HCT116 (cell line): ENCODE measurements at regions of chr16 and their contacts with region 1.

Region 1: DNA sequence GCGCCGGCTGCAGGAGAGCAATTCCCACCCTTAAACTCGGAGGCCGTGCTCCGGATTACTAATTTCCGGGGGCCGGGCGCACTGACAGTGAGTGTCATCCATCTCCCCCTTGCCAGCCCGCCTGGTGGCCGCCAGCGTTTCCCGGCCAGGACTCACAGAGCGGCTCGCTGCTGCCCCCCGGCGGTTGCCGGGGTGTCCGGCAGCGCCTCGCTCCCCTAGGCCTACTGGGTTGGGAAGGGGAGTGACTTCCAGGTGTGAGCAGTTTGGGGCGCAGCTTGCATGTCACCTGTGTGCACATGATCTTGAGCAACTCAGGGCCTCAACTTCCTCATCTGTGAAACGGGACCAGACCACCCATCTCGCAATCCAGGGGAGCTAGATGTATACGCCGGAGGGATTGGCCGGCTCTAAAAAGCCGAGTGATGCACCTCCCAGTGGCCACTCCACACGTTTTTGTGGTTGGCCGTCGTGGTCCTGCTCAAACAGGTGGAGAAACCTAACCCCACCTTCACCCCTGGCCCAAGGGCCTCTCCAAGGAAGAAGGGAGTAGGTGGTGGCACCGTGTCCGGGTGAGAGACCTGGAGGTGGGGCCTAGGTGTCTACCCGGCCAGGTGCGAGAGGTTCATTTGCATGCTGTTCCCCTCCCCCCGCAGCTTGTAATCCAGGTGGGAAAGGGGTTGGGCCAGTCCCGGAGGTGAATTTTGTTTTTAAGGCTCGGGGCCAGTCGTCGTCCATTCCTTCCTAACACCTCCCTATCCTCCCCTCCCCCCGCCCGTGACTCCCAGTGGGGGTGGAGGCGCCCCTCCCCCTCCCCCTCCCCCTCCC is 2.4 kb upstream of the GSE1 start:
- DNase-seq: peak; percentile 83
- ATAC-seq: peak; percentile 49
- H3K4me3 ChIP-seq: peak overlapping the region; percentile 85 to 91
- H3K27ac ChIP-seq: peak overlapping the region; percentile 98
- H3K4me1 ChIP-seq: peaks cover 20 to 52% of the 10 kb centered on the region in 2 experiments
- H3K27me3 ChIP-seq: no peaks in the 10 kb centered on the region
- CTCF ChIP-seq: peak in 2 of 3 experiments; percentile 99 to 100; a peak in 4 of 6 replicates
- POLR2A ChIP-seq: no peak
- RAD21 ChIP-seq: no peak

Region 2: GRCh38 chr16:85220125-85220839 is 390.4 kb before region 1 on chr16:
- CTCF ChIA-PET with region 1: no interaction called
- POLR2A ChIA-PET with region 1: no interaction called
- RAD21 ChIA-PET with region 1: no interaction called
- intact Hi-C with region 1: no loop called
- DNase-seq: no peak
- ATAC-seq: no peak
- H3K4me3 ChIP-seq: no peak overlapping the region
- H3K27ac ChIP-seq: no peak overlapping the region; the same call in 1 of the 2 replicates
- H3K4me1 ChIP-seq: peaks cover 5 to 12% of the 10 kb centered on the region in 2 experiments; a peak in 3 of 4 replicates
- H3K27me3 ChIP-seq: no peaks in the 10 kb centered on the region
- CTCF ChIP-seq: no peak
- POLR2A ChIP-seq: no peak
- RAD21 ChIP-seq: no peak

Region 3: GRCh38 chr16:85347213-85347591 is 263.5 kb before region 1 on chr16:
- CTCF ChIA-PET with region 1: interaction called, 12 read pairs
- POLR2A ChIA-PET with region 1: interaction called, 3 read pairs
- RAD21 ChIA-PET with region 1: no interaction called
- intact Hi-C with region 1: loop called (anchors 1 kb)
- DNase-seq: no peak
- ATAC-seq: peak; percentile 66
- H3K4me3 ChIP-seq: no peak overlapping the region
- H3K27ac ChIP-seq: no peak overlapping the region
- H3K4me1 ChIP-seq: peaks cover 18 to 21% of the 10 kb centered on the region in 2 experiments
- H3K27me3 ChIP-seq: no peaks in the 10 kb centered on the region
- CTCF ChIP-seq: peak in 2 of 3 experiments; percentile 77 to 85; a peak in 5 of 6 replicates
- POLR2A ChIP-seq: no peak
- RAD21 ChIP-seq: peak; percentile 84

Region 4: DNA sequence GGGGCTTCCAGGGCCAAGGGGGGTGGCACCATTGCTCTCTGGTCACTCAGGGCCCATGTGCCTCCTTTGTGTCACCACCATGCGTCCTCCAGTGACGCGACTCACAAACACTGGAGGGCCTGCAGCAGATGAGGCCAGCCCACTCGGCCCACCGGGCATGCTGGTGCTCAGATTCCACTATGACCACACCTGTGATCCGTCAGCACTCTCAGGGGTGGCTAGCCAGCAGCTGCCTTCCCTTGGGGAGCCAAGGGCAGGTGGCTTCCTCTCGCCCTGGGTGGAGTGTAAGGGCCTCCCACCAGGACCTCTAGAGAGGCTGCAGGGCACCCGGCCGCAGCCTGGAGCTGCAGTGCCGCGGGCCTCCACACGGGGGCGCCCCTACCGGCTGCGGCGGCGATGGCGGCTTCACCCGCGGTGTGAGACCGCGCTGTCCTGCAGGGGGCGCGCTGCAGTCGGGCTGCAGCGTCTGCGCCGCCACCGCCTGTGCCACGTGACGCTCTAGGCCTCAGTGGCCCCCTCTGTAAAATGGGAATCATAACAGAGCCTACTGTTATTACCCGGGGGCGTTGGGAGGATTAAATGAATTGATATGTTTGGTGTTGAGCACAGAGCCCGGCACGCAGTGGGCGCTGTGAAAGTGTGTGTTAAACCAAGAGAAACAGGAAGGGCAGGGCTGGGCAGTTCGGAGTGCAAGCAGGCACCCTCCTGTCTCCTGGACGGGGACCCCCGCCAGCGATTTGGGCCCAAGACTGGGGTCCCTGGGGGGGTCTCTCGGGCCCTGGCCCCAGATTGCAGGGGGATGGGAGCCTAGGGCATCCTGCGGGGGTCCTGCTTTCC is 190.0 kb before region 1 on chr16:
- CTCF ChIA-PET with region 1: interaction called, 27 read pairs
- POLR2A ChIA-PET with region 1: interaction called, 4 read pairs
- RAD21 ChIA-PET with region 1: interaction called, 4 to 10 read pairs
- intact Hi-C with region 1: loop called (anchors 1 kb)
- DNase-seq: peak; percentile 49
- ATAC-seq: peak; percentile 76
- H3K4me3 ChIP-seq: no peak overlapping the region
- H3K27ac ChIP-seq: no peak overlapping the region
- H3K4me1 ChIP-seq: peaks cover 8 to 16% of the 10 kb centered on the region in 2 experiments
- H3K27me3 ChIP-seq: no peaks in the 10 kb centered on the region
- CTCF ChIP-seq: peak; percentile 100
- POLR2A ChIP-seq: no peak
- RAD21 ChIP-seq: peak; percentile 98

Region 5: GRCh38 chr16:85491058-85491771 is 119.5 kb before region 1 on chr16:
- CTCF ChIA-PET with region 1: interaction called, 30 read pairs
- POLR2A ChIA-PET with region 1: interaction called, 3 read pairs
- RAD21 ChIA-PET with region 1: interaction called, 3 to 11 read pairs
- intact Hi-C with region 1: loop called (anchors 10 kb)
- DNase-seq: peak; percentile 31
- ATAC-seq: peak; percentile 77
- H3K4me3 ChIP-seq: peak overlapping the region in 1 of 2 experiments; percentile 47; a peak in 2 of 4 replicates
- H3K27ac ChIP-seq: peak overlapping the region; percentile 32; the same call in 1 of the 2 replicates
- H3K4me1 ChIP-seq: peaks cover 22 to 25% of the 10 kb centered on the region in 2 experiments
- H3K27me3 ChIP-seq: no peaks in the 10 kb centered on the region
- CTCF ChIP-seq: peak; percentile 93 to 100 (median 100)
- POLR2A ChIP-seq: no peak
- RAD21 ChIP-seq: peak; percentile 80

Region 6: DNA sequence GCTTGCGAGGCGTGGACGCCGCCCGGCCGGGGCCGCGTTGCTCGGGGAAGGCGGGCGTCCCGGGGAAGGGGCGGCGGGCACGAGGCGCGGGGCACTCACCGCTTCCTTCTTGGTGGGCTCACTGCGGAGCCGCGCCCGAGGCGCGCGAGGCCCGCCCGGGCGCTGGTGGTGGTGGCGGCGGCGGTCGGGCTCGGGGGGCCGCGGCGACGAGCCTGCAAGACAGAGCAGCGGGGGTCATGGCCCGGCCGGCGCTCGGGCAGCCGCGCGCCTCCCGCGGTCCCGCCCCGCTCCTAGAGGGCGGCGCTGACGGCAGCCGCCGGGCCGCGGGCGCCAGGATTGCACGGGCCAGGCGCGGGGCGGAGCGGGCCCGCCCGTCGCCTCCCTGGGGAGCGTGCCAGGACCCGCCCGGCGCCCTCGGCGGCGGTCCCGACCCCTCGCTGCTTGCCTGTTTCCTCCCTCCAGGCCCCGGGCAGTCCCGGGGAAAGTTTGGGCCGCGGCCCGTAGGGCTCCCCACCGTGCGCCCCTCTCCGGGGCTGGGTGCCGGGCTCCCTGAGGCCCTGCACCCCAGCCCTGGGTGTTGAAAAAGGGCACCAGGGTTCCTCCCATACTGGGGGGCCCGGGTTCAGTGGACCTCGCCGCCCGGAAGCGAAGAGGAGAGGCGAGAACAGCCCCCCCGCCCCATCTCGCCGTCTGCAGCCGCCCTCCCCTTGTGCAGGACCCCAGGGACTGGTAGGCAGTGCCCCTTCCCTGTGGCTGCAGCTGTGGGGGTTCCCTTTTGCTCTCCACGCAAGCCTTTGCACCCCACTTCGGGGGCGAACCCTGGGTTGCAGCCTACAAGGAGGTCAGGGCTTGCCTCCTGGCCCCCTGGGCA is 140.3 kb after region 1 on chr16 and contains the start of gene C16orf74:
- CTCF ChIA-PET with region 1: no interaction called
- POLR2A ChIA-PET with region 1: no interaction called
- RAD21 ChIA-PET with region 1: no interaction called
- intact Hi-C with region 1: loop called (anchors 1 kb)
- DNase-seq: no peak
- ATAC-seq: peak; percentile 79
- H3K4me3 ChIP-seq: peak within 1 kb of the TSS; percentile 69 to 72
- H3K27ac ChIP-seq: peak within 1 kb of the TSS; percentile 82
- H3K4me1 ChIP-seq: peaks cover 42 to 63% of the 10 kb centered on the region in 2 experiments
- H3K27me3 ChIP-seq: no peaks in the 10 kb centered on the region; the same call in 1 of the 2 replicates
- CTCF ChIP-seq: no peak
- POLR2A ChIP-seq: peak; percentile 47
- RAD21 ChIP-seq: no peak
- total RNA-seq, gene C16orf74: 30.0 TPM